Uterus (tissue), 4 donors: ENCODE measurements at regions of chr22 and their contacts with region 1.

Region 1: DNA sequence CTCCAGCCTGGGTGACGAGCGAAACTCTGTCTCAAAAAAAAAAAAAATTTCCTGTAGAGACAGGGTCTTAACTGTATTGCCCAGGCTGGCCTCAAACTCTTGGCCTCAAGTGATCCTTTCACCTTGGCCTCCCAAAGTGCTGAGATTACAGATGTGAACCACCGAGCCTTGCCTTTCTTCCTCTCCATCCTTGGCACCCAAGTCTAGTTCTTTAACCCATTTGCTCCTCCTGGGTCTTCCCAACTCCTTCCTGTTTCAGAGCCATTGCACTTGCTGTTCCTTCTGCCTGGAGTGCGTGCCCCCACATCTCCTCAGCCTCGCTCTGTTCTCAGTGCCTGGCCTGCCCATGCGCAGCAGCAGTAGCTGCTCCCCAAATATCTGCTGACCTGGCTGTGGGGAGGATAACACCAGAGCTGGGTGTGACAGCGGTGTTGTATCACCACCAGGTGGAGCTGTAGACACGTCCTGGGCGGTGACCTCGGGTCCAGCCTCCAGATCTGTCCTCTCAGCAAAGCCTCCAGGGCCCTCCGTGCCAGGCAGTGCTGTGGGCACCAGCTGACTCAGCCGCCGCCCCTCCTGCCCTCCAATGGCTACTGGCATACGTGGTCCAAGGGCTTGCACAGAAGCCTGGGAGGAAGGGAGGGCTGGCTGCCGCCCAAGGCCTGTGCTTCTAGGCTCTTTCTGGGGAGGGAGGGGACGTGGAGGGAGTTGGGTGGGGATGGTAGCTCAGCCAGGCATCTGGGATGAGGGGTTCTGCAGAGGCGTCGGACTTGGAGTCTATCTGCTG is 22.0 kb downstream of the TEF start:
- DNase-seq: peak; percentile 87 to 88
- H3K4me3 ChIP-seq: no peak overlapping the region
- H3K27ac ChIP-seq: peak overlapping the region; percentile 32 to 34
- H3K4me1 ChIP-seq: peaks cover 4 to 11% of the 10 kb centered on the region in 2 donors
- H3K27me3 ChIP-seq: no peaks in the 10 kb centered on the region
- CTCF ChIP-seq: peak; percentile 96 to 99 (median 98)
- POLR2A ChIP-seq: peak in 1 of 2 donors; percentile 48

Region 2: GRCh38 chr22:41517172-41518047 is 113.7 kb after region 1 on chr22:
- intact Hi-C with region 1: loop called (anchors 5 kb)
- DNase-seq: peak; percentile 80 to 81
- H3K4me3 ChIP-seq: no peak overlapping the region
- H3K27ac ChIP-seq: peak overlapping the region; percentile 24 to 53
- H3K4me1 ChIP-seq: peaks cover 0 to 3% of the 10 kb centered on the region in 2 donors
- H3K27me3 ChIP-seq: no peaks in the 10 kb centered on the region
- CTCF ChIP-seq: peak; percentile 89 to 93 (median 90)
- POLR2A ChIP-seq: no peak

Region 3: DNA sequence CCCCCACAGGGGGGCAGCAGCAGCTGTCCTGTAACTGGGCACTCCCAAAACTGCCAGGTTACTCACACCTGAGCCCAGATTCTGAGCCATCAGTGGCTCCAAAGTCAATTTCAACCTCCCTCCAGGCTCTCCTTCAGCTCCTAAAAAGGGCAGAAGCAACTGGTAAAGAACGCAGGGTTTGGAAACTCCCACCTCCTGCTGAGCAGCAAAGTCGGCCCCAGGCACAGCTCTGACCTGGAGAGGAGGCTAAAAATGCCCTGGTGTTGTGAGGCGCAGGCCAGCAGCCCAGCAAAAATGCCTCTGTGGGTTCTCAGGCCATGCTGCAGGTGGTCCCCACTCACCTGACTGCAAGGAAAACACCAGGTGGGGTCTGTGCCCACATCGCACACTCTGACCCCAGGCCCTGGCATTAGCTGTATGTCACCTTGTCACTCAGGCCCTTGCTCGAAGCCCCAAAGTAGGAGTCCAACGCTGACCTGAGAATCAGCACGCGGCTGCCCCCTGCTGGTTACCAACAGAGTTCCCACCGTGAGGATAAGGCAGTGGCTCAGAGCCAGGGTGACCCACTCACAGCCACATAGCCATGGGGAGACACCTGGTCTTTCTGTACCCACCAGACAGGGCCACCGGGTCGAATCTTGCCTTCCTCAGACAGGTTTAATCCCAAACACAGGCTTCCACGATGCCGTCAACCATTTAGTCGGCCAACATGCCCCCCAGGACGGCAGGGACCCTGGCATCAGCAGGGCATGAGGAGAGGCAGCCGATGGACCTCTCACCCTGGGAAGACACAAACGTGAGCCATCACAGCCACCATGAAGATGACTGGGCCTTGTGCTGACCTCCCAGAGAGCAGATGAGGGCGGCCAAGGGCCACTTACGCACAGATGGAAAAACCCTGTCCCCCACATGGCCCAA is 129.4 kb after region 1 on chr22:
- intact Hi-C with region 1: loop called (anchors 5 kb)
- DNase-seq: peak; percentile 75 to 78
- H3K4me3 ChIP-seq: no peak overlapping the region
- H3K27ac ChIP-seq: peak overlapping the region; percentile 54 to 63
- H3K4me1 ChIP-seq: no peaks in the 10 kb centered on the region
- H3K27me3 ChIP-seq: no peaks in the 10 kb centered on the region
- CTCF ChIP-seq: peak; percentile 49 to 75 (median 70)
- POLR2A ChIP-seq: no peak